ENCODE measurements at regions of chr12 and their contacts with region 1.

Region 1: GRCh38 chr12:93569656-93570551 is 2.6 kb upstream of the SOCS2 start:
- DNase-seq: peak; percentile 90 to 92 (median 91)
- ATAC-seq: peak; percentile 76 to 84 (median 79)
- H3K4me3 ChIP-seq: peak overlapping the region; percentile 61 to 90 (median 72)
- H3K27ac ChIP-seq: peak overlapping the region; percentile 81 to 99 (median 96)
- H3K4me1 ChIP-seq: peaks cover 0 to 35% (median 6%) of the 10 kb centered on the region in 12 donors
- H3K27me3 ChIP-seq: peaks cover 0 to 21% (median 0%) of the 10 kb centered on the region in 9 donors
- CTCF ChIP-seq: peak; percentile 60 to 93 (median 88)
- POLR2A ChIP-seq: no peak

Region 2: GRCh38 chr12:92393504-92393903 is 1176.4 kb before region 1 on chr12:
- intact Hi-C with region 1: no loop called
- DNase-seq: no peak
- ATAC-seq: no peak
- H3K4me3 ChIP-seq: no peak overlapping the region
- H3K27ac ChIP-seq: no peak overlapping the region
- H3K4me1 ChIP-seq: peaks cover 0 to 19% (median 0%) of the 10 kb centered on the region in 12 donors
- H3K27me3 ChIP-seq: no peaks in the 10 kb centered on the region
- CTCF ChIP-seq: no peak
- POLR2A ChIP-seq: no peak

Region 3: DNA sequence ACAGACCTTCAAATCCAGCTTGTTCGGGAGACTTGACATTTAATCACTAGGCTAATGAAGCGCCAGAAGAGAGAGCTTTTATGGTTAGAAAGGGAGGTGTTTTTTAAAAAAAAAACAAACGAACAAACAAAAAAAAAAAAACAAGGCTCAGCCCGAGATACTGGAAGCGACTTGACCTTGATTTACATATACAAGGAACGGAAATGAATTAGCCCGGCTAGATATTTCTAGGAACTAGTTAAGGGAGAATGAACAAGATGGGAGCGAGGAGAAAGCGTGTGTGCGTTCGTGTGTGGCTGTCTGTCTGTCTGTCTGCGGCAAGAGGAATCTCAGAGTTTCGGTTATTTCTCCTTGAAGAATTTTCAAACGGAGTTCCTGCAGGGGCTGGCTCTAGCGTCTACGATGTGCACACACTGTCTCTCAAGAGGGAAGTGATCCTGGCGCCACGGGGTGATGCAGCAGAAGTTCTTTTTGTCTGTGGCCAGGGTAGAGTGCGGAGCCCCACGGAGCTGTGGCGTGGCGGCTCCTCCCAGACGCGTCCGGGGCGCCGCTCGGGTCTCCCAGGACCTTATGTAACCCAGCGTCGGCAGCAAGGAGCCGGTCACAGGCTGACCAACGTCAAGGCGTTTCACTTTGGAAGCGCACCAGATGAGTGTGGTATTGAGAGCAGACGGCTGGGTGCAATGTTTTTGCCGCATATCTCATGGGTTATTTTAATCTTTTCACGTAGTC is 21.4 kb after region 1 on chr12:
- intact Hi-C with region 1: loop called in 9 of 10 experiments (anchors 1 to 2 kb)
- DNase-seq: peak; percentile 87 to 91 (median 89)
- ATAC-seq: peak; percentile 81 to 97 (median 94)
- H3K4me3 ChIP-seq: peak overlapping the region; percentile 38 to 72 (median 59)
- H3K27ac ChIP-seq: peak overlapping the region; percentile 74 to 96 (median 88)
- H3K4me1 ChIP-seq: peaks cover 0 to 48% (median 18%) of the 10 kb centered on the region in 12 donors
- H3K27me3 ChIP-seq: no peaks in the 10 kb centered on the region
- CTCF ChIP-seq: no peak
- POLR2A ChIP-seq: peak in 1 of 2 donors; percentile 72

Region 4: GRCh38 chr12:93653079-93653478 is 83.2 kb after region 1 on chr12:
- intact Hi-C with region 1: no loop called
- DNase-seq: no peak
- ATAC-seq: no peak
- H3K4me3 ChIP-seq: no peak overlapping the region
- H3K27ac ChIP-seq: no peak overlapping the region
- H3K4me1 ChIP-seq: no peaks in the 10 kb centered on the region
- H3K27me3 ChIP-seq: no peaks in the 10 kb centered on the region
- CTCF ChIP-seq: no peak
- POLR2A ChIP-seq: no peak

Region 5: DNA sequence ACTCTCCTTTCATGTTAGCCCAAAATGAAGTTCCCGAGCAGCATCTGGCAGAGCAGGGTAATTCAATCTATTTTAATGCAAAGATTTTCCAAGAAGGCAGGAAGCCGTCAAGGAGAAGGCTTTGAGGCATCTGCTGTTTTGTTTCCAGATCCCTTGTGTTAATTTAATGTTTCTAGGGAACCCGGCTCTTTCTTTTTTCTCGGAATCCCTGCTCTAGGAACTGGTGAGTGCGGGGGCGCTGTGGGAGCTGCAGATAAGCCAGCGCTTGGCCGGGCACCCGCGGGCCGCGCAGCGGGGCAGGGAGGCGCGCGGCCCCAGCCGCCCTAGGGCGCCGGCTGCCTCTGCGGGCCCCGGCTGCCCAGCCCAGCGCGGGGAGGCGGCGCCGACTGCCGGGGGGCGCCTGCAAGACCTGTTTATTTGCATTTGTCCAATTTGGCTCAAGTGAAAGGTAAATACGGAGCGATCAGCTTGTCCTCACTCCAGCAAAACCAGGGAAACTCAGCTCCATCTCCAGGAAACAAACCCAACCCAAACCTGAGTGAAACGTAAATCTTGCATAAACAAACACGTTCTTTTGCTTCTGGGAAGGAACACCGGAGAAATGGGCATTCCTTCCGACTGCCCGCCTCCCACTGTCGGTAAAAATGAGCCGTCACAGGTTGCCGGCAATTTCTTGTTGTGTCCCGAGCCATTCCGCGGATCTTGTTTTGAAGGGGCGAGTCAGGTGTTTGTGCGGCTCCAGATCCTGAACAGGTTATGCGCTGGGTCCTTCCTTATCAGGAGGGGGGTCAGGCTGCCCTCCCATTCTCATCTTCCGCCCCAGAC is 172.4 kb after region 1 on chr12:
- intact Hi-C with region 1: loop called (anchors 1 to 5 kb)
- DNase-seq: peak; percentile 73 to 85 (median 80)
- ATAC-seq: peak; percentile 78 to 97 (median 92)
- H3K4me3 ChIP-seq: peak overlapping the region; percentile 33 to 70 (median 64)
- H3K27ac ChIP-seq: peak overlapping the region; percentile 88 to 95 (median 93)
- H3K4me1 ChIP-seq: peaks cover 0 to 85% (median 60%) of the 10 kb centered on the region in 12 donors
- H3K27me3 ChIP-seq: no peaks in the 10 kb centered on the region
- CTCF ChIP-seq: peak in 9 of 12 donors; percentile 17 to 54 (median 36)
- POLR2A ChIP-seq: peak in 1 of 2 donors; percentile 13

Region 6: GRCh38 chr12:93802698-93803423 is 233.0 kb after region 1 on chr12:
- intact Hi-C with region 1: loop called in 1 of 10 experiments (anchors 10 kb)
- DNase-seq: no peak
- ATAC-seq: peak; percentile 47 to 80 (median 69)
- H3K4me3 ChIP-seq: peak overlapping the region in 4 of 12 donors; percentile 3 to 23 (median 12)
- H3K27ac ChIP-seq: peak overlapping the region; percentile 14 to 92 (median 68)
- H3K4me1 ChIP-seq: peaks cover 5 to 43% (median 33%) of the 10 kb centered on the region in 12 donors
- H3K27me3 ChIP-seq: no peaks in the 10 kb centered on the region
- CTCF ChIP-seq: peak in 8 of 12 donors; percentile 15 to 56 (median 39)
- POLR2A ChIP-seq: no peak

Region 7: GRCh38 chr12:93968536-93969285 is 398.8 kb after region 1 on chr12:
- intact Hi-C with region 1: no loop called
- DNase-seq: no peak
- ATAC-seq: no peak
- H3K4me3 ChIP-seq: no peak overlapping the region
- H3K27ac ChIP-seq: no peak overlapping the region
- H3K4me1 ChIP-seq: peaks cover 0 to 12% (median 4%) of the 10 kb centered on the region in 12 donors
- H3K27me3 ChIP-seq: no peaks in the 10 kb centered on the region
- CTCF ChIP-seq: no peak
- POLR2A ChIP-seq: no peak

Region 8: GRCh38 chr12:94074980-94075928 is 505.4 kb after region 1 on chr12:
- intact Hi-C with region 1: loop called in 3 of 10 experiments (anchors 1 to 5 kb)
- DNase-seq: peak in 4 of 5 donors; percentile 73 to 80 (median 77)
- ATAC-seq: peak; percentile 76 to 90 (median 84)
- H3K4me3 ChIP-seq: peak overlapping the region in 6 of 12 donors; percentile 4 to 36 (median 10)
- H3K27ac ChIP-seq: peak overlapping the region; percentile 74 to 96 (median 84)
- H3K4me1 ChIP-seq: peaks cover 0 to 36% (median 23%) of the 10 kb centered on the region in 12 donors
- H3K27me3 ChIP-seq: no peaks in the 10 kb centered on the region
- CTCF ChIP-seq: peak; percentile 59 to 88 (median 69)
- POLR2A ChIP-seq: no peak